SK-N-SH (cell line): ENCODE measurements at regions of chr1 and their contacts with region 1.

Region 1: GRCh38 chr1:29703596-29704370 is 467.5 kb downstream of the PTPRU start:
- DNase-seq: peak; percentile 81
- H3K4me3 ChIP-seq: no peak overlapping the region
- H3K27ac ChIP-seq: no peak overlapping the region; a peak in 1 of 4 replicates
- H3K4me1 ChIP-seq: peaks cover 12 to 41% of the 10 kb centered on the region in 2 experiments
- H3K27me3 ChIP-seq: no peaks in the 10 kb centered on the region
- CTCF ChIP-seq: peak; percentile 72
- EP300 ChIP-seq: no peak
- RAD21 ChIP-seq: peak; percentile 76

Region 2: DNA sequence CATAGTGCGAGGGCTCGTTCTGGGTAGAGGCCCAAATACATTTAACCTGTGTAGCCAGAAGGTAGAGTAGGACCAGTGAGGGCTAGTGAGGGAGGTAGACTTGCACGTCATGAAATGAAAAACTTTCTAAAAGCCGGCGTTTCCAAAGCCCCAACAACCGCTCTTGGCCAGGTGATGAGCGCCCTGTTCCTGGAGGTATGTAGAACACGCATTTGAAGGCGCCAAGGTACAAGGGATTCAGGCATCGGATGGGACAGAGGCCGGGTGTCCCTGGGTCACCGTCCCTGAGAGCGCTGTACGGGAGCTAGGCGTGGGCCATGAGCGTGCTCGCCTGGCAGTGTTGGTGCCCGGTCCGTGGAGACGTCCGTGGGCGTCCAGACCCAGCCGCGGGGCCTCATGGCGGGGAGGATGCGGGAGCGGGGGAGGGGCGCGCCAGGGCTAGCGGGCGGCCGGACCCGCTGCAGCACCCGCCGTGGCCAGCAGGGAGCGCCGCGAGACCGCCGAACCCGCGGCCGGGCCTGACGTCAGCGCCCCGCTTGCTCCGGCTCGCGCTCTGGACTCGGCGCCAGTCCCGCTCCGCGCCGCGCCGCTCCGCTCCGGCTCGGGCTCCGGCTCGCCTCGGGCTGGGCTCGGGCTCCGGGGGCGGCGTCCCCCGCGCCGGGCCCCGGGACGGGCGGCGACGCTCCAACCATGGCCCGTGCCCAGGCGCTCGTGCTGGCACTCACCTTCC is 467.7 kb before region 1 on chr1 and contains the start of gene PTPRU:
- CTCF ChIA-PET with region 1: interaction called, 20 read pairs
- POLR2A ChIA-PET with region 1: no interaction called
- DNase-seq: peak; percentile 98
- H3K4me3 ChIP-seq: peak within 1 kb of the TSS; percentile 49 to 89
- H3K27ac ChIP-seq: peak within 1 kb of the TSS in 1 of 2 experiments; percentile 29; a peak in 1 of 4 replicates
- H3K4me1 ChIP-seq: peaks cover 6 to 37% of the 10 kb centered on the region in 2 experiments; a peak in 2 of 4 replicates
- H3K27me3 ChIP-seq: peaks cover 6% of the 10 kb centered on the region
- CTCF ChIP-seq: peak; percentile 58
- EP300 ChIP-seq: no peak
- RAD21 ChIP-seq: peak; percentile 86
- polyA plus RNA-seq, gene PTPRU: 2.9 and 3.5 TPM in 2 replicates

Region 3: GRCh38 chr1:29332204-29332603 is 371.6 kb before region 1 on chr1:
- CTCF ChIA-PET with region 1: interaction called, 11 read pairs
- POLR2A ChIA-PET with region 1: no interaction called
- DNase-seq: no peak
- H3K4me3 ChIP-seq: no peak overlapping the region; a peak in 1 of 4 replicates
- H3K27ac ChIP-seq: no peak overlapping the region
- H3K4me1 ChIP-seq: no peaks in the 10 kb centered on the region
- H3K27me3 ChIP-seq: no peaks in the 10 kb centered on the region
- CTCF ChIP-seq: peak; percentile 47
- EP300 ChIP-seq: no peak
- RAD21 ChIP-seq: peak; percentile 56

Region 4: DNA sequence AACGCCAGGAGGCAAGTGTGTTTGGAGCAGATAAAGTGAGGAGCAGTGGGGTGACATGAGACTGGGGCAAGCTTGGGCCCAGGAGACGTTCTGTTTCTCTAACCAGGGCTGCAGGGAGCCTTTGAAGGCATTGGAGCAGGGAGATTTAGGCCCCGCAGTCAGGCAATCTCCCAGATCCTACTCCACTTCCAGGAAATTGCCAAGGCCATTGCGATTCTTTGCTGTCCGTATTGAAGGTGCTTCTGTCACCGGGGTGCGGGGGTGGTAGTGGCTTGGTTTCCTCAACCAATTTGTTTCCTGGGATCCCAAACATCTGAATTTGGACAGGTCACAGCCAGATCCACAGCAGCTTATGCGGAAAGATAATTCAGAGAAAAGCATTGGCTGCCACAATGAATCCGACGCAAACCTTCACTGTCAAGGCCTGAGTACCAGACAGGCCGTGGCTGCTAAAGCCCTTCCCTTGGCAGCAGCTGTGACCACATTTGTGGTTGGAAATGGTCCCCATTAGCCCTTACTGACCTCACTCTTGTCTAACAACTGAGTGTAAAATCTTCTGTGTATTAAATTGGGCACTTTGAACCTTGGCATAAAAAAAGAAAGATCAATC is 81.9 kb before region 1 on chr1:
- CTCF ChIA-PET with region 1: no interaction called
- POLR2A ChIA-PET with region 1: no interaction called
- DNase-seq: no peak
- H3K4me3 ChIP-seq: no peak overlapping the region
- H3K27ac ChIP-seq: no peak overlapping the region
- H3K4me1 ChIP-seq: peaks cover 0 to 7% of the 10 kb centered on the region in 2 experiments; a peak in 1 of 4 replicates
- H3K27me3 ChIP-seq: no peaks in the 10 kb centered on the region
- CTCF ChIP-seq: no peak
- EP300 ChIP-seq: no peak
- RAD21 ChIP-seq: no peak

Region 5: GRCh38 chr1:29653034-29653810 is 50.6 kb before region 1 on chr1:
- CTCF ChIA-PET with region 1: interaction called, 11 read pairs
- POLR2A ChIA-PET with region 1: no interaction called
- DNase-seq: no peak
- H3K4me3 ChIP-seq: no peak overlapping the region
- H3K27ac ChIP-seq: no peak overlapping the region
- H3K4me1 ChIP-seq: peaks cover 0 to 43% of the 10 kb centered on the region in 2 experiments; a peak in 1 of 4 replicates
- H3K27me3 ChIP-seq: no peaks in the 10 kb centered on the region
- CTCF ChIP-seq: no peak
- EP300 ChIP-seq: no peak
- RAD21 ChIP-seq: no peak

Region 6: DNA sequence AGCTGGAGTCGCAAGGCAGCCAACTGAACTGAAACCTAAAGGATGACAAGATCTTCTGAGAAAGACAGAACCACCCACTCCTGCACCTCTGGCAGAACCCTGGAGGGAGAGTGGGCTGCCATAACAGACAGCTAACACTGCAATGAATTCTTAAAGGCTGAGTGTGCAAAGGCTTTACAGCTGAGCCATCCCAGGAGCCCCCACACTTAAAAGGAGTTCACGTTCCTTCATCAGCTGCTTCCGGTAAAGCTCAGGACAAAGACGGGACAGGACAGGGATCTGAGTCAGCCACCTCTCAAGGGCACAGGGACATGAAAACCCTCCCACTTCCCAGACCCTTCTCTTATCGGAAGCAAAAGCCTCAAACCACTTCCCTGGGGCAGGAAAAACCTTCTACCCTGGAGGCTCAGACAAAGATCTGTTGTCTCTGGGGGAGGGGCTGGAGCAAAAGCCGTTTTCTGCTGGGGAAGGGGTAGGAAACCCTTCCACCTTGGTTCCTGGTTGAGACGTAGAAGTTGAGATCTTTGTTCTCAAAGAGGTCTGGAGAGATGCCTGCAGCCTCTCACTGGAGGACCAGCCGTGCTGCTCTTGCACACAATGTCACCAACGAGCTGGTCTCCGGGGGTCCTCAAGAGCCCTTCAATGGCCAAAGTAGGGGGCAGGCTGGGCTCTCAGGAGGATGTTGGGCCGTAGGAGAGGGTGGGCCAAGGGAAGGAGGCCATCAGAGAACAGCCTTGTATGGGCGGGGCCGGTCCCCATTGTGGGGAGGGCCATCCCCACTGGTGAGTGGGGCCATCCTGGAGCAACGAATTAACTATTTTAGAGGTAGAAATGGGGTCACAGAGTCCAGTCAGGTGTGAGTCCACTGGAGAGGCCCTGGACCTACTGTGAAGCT is 15.1 kb before region 1 on chr1:
- CTCF ChIA-PET with region 1: interaction called, 57 read pairs
- POLR2A ChIA-PET with region 1: interaction called, 3 read pairs
- DNase-seq: no peak
- H3K4me3 ChIP-seq: no peak overlapping the region
- H3K27ac ChIP-seq: peak overlapping the region; percentile 53 to 93
- H3K4me1 ChIP-seq: peaks cover 13 to 74% of the 10 kb centered on the region in 2 experiments
- H3K27me3 ChIP-seq: no peaks in the 10 kb centered on the region
- CTCF ChIP-seq: no peak
- EP300 ChIP-seq: no peak
- RAD21 ChIP-seq: no peak

Region 7: GRCh38 chr1:29730623-29731022 is 26.8 kb after region 1 on chr1:
- CTCF ChIA-PET with region 1: no interaction called
- POLR2A ChIA-PET with region 1: no interaction called
- DNase-seq: no peak
- H3K4me3 ChIP-seq: no peak overlapping the region
- H3K27ac ChIP-seq: no peak overlapping the region
- H3K4me1 ChIP-seq: peaks cover 0 to 5% of the 10 kb centered on the region in 2 experiments; a peak in 1 of 4 replicates
- H3K27me3 ChIP-seq: no peaks in the 10 kb centered on the region
- CTCF ChIP-seq: no peak
- EP300 ChIP-seq: no peak
- RAD21 ChIP-seq: no peak

Region 8: DNA sequence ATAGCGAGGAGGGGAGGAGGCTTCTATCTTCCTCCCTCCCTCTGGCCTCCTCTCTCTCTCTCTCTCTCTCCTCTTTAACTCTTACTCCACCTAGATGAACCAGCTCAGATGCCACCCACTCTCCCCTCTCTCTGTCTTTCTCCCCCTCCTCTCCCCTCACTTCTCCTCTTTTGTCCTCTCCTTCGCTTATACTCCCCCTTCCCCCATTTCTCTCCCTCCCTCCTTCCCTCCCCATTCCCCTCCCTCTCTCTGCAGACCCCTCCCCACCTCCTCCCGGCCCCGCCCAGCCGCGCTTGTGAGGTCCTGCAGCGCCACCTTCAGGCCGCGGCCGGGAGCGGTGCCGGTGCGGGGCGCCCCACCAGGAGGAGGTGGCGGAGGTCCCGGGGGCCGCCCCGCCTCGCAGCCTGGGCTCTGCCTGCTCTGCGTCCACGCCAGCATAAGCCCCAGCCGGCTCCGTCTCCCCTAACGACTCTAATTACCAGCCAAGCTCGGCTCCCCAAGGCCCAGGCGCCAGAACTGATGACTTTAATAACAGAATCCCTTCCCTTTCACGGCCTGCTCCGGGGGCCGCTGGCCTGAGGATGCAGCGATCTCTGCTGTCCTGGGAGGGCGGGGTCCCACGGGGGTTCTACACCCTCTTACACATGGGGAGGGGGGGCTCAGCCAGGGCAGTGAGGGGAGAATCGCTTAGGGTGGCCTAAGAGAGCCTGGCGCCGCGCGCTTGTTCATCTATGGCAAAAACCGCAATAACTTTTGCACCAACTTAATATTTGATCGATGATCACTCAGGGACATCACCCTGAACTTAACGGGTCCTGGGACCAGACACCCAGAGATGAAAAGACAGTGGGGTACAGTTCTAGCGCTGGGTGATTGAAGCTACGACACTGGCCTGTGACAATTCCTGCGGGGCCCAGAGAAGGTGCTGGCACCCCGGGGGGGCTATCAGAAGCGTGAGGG is 382.3 kb after region 1 on chr1:
- CTCF ChIA-PET with region 1: interaction called, 28 read pairs
- POLR2A ChIA-PET with region 1: no interaction called
- DNase-seq: peak; percentile 93
- H3K4me3 ChIP-seq: peak overlapping the region; percentile 39 to 58
- H3K27ac ChIP-seq: peak overlapping the region in 1 of 2 experiments; percentile 31; a peak in 1 of 4 replicates
- H3K4me1 ChIP-seq: peaks cover 35 to 46% of the 10 kb centered on the region in 2 experiments; a peak in 3 of 4 replicates
- H3K27me3 ChIP-seq: no peaks in the 10 kb centered on the region
- CTCF ChIP-seq: peak; percentile 87
- EP300 ChIP-seq: no peak
- RAD21 ChIP-seq: peak; percentile 77